Sciatic nerve (tissue), 2 donors: ENCODE measurements at regions of chr1 and their contacts with region 1.

Region 1: GRCh38 chr1:116934586-116935207 is 25.0 kb downstream of the PTGFRN start:
- DNase-seq: no peak
- ATAC-seq: no peak

Region 2: DNA sequence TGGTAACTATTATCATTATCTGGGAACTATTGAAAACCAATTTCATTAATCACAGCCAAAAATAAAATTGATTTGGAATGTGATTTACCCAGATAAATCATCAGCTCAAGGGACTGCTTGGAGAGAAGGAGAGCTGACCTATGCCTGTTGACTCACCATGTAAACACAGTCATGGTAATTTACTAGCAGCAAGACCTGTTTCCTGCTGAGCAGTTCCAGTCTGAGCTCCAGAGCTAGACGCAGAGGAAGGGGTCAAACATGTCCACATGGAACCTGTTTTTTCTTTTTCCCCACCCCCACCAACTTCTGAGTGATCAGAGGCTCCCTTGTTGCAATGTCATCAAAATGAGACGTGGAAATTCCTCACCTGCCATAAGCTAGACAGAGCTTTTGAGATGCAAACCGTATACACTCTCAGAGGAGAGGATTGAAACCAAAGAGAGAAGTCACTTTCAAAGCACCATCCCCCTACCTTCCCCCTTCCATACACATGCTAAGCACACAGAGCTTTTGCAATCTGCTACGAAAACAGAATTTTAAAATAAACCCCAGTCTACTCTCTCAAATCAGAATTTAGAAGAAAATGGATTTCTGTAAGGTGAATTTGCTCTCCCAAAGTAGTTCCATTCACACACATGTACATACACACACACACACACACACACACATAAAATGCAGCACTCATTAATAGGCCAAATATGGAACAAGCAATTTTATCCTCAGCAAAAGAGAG is 80.9 kb before region 1 on chr1:
- intact Hi-C with region 1: loop called (anchors 10 kb)
- DNase-seq: no peak
- ATAC-seq: peak; percentile 35